ENCODE measurements at regions of chr17 and their contacts with region 1.

Region 1: DNA sequence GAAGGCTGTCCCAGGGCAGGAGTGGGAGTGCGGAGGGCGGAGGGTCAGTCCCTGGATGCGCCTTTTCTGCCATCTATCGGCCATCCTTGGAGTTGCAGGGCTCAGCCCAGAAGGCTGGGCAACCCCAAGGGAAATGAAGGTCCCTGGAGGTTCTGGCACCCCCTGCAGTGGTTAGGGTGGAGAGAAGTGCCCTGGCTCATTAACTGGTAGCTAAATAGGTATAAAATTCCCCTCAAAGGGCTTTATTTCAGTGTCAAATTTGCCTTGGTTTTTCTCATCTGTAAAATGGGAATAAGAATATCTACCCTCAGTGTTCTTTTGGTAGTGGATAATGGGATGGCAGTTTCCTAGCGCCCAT is 22.4 kb downstream of the C17orf75 start:
- DNase-seq: peak; percentile 47 to 98
- H3K4me3 ChIP-seq: no peak overlapping the region
- H3K27ac ChIP-seq: no peak overlapping the region
- H3K4me1 ChIP-seq: peaks cover 0 to 15% (median 10%) of the 10 kb centered on the region in 4 experiments; a peak in 6 of 7 replicates
- H3K27me3 ChIP-seq: no peaks in the 10 kb centered on the region
- CTCF ChIP-seq: peak; percentile 96 to 99 (median 99)
- EP300 ChIP-seq: peak in 1 of 2 experiments; percentile 94; a peak in 1 of 3 replicates
- POLR2A ChIP-seq: no peak
- RAD21 ChIP-seq: peak; percentile 98

Region 2: DNA sequence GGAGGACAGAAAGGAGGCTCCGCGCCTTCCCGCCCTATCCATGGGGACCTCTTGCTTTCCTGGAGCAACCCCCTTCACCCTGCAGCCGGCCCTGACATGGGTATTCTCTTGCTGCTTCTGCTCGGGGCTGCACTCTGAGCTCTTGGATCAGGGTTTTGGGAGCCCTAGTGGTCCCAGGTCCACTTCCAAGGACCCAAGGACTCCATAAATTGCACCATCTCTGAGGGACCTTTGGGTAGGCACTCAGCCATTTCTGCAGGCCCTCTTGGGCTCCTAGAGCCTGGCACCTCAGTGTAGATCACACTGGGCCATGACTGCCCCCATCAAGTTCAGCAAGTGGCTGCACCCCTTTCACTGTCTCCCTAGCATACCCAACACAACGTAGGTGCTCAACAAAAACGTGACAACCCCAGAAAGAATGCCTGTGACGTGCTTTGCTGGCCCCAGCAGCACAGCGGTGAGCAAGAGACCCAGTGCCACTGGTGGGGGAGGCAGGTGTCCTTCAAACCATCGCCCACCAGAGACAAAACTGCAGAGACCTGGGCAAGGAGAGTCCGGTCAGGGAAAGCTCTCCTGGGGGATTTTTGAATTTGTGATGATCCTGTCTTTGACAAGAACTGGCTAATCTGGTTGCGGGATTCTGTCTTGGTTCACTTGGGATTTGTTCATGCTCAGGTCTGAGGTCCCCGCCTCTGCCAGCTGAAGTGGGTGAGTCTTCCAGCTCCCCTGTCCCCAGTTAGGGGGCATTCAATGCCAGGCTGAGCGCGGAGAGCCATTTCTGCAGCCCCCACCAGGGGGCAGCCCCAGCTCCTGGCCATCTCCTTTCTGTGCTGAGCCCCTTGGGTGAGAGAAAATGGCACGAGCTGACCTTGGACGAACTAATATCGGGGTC is 930.5 kb before region 1 on chr17:
- CTCF ChIA-PET with region 1: no interaction called
- POLR2A ChIA-PET with region 1: no interaction called
- DNase-seq: peak in 1 of 2 experiments; percentile 87
- H3K4me3 ChIP-seq: peak overlapping the region in 1 of 4 experiments; percentile 30; a peak in 1 of 8 replicates
- H3K27ac ChIP-seq: no peak overlapping the region
- H3K4me1 ChIP-seq: peaks cover 0 to 14% (median 9%) of the 10 kb centered on the region in 4 experiments; a peak in 6 of 7 replicates
- H3K27me3 ChIP-seq: peaks cover 1 to 29% (median 22%) of the 10 kb centered on the region in 4 experiments
- CTCF ChIP-seq: peak; percentile 78 to 89 (median 85)
- EP300 ChIP-seq: no peak
- POLR2A ChIP-seq: no peak
- RAD21 ChIP-seq: peak; percentile 67 to 79

Region 3: DNA sequence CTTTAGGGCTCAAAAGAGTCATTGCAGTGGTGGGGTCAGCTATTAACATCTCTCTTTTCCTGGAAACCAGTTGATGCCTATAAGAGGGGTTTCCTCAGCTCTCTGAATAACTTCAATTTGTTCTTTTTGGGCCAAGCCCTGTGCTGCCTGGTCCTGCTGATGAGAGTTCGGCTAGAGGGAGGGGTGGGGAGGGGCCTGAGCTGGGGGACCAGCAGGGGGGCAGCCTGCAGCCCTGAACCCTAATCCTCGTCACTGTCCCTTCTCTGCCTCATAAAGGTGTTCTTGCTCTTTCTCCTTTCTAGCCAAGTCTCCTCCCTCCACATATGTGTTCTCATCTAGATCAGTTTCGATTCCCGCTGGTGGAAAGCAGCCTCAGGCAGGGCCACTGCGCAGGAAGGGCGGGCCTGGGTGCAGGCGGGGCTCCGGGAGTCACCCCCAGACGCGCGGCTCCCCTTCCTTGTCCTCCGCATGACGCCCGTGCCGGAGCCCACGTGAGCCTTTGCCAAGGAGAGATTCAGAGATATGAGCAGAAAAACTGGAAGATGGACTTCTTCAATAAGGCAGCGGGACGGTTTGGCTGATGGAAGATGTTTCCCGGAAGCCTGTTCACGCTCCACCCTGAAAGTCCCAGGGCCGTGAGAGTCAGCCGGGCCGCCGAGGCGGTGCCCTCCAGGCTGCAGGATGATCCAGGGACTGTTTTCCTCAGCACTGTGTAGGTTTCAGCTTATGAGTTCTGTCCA is 192.2 kb before region 1 on chr17:
- CTCF ChIA-PET with region 1: no interaction called
- POLR2A ChIA-PET with region 1: no interaction called
- DNase-seq: peak in 1 of 2 experiments; percentile 76
- H3K4me3 ChIP-seq: peak overlapping the region; percentile 61 to 88 (median 74)
- H3K27ac ChIP-seq: peak overlapping the region; percentile 25; the same call in 1 of the 2 replicates
- H3K4me1 ChIP-seq: peaks cover 0 to 5% (median under 1%) of the 10 kb centered on the region in 4 experiments; a peak in 3 of 7 replicates
- H3K27me3 ChIP-seq: no peaks in the 10 kb centered on the region
- CTCF ChIP-seq: no peak
- EP300 ChIP-seq: no peak
- POLR2A ChIP-seq: peak in 1 of 2 experiments; percentile 40; a peak in 1 of 3 replicates
- RAD21 ChIP-seq: no peak

Region 4: DNA sequence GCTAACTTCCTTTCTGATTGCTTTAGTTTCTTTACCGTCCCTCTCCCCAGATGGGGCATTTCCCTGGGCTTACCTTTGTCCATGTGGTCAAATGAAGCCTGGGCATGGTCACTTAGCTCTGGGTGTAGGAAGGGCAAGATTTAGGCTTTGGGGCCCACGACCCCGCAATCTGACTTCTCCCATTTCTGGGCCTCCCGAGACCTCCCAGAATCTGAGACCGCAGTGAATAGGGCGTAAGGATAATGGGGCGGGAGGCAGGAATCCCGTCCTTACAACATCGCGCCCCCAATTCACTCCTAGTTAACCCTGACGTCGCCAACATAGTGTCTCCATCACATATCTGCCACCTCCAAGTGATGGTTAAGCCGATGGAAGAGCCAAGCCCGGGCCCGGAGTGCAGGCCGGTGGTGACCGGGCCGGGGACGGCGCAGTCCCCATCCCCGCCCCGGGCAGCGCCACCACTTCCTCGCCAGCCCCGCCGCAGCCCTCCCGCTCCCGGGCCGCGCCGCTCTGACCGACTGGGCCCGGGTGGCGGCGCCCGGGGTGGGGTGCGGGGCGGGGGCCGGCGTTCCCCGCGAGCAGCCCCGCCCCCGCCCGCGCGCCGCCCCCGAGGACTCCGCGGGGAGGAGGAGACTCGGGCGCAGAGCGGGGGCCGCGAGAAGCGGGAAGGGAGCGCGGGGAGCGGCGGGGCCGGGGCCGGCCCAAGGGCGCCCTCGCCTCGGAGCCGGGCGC is 54.2 kb before region 1 on chr17 and contains the start of gene RHBDL3:
- CTCF ChIA-PET with region 1: interaction called, 61 read pairs
- POLR2A ChIA-PET with region 1: interaction called, 3 read pairs
- DNase-seq: no peak
- H3K4me3 ChIP-seq: peak within 1 kb of the TSS; percentile 42 to 87 (median 67)
- H3K27ac ChIP-seq: no peak within 1 kb of the TSS
- H3K4me1 ChIP-seq: peaks cover 7 to 24% (median 16%) of the 10 kb centered on the region in 4 experiments
- H3K27me3 ChIP-seq: peaks cover 0 to 34% (median 29%) of the 10 kb centered on the region in 4 experiments; a peak in 5 of 7 replicates
- CTCF ChIP-seq: no peak
- EP300 ChIP-seq: no peak
- POLR2A ChIP-seq: no peak
- RAD21 ChIP-seq: no peak
- total RNA-seq, gene RHBDL3: 11.8 and 12.2 TPM in 2 replicates

Region 5: GRCh38 chr17:32281011-32281451 is 38.5 kb before region 1 on chr17:
- CTCF ChIA-PET with region 1: interaction called, 32 read pairs
- POLR2A ChIA-PET with region 1: interaction called, 3 read pairs
- DNase-seq: peak in 1 of 2 experiments; percentile 82
- H3K4me3 ChIP-seq: peak overlapping the region in 2 of 4 experiments; percentile 20 to 22; a peak in 1 of 8 replicates
- H3K27ac ChIP-seq: no peak overlapping the region
- H3K4me1 ChIP-seq: peaks cover 8 to 42% (median 32%) of the 10 kb centered on the region in 4 experiments
- H3K27me3 ChIP-seq: peaks cover 0 to 2% (median 0%) of the 10 kb centered on the region in 4 experiments; a peak in 2 of 7 replicates
- CTCF ChIP-seq: no peak
- EP300 ChIP-seq: no peak
- POLR2A ChIP-seq: no peak; a peak in 1 of 3 replicates
- RAD21 ChIP-seq: no peak

Region 6: GRCh38 chr17:32302860-32303649 is 16.5 kb before region 1 on chr17:
- CTCF ChIA-PET with region 1: interaction called, 27 read pairs
- POLR2A ChIA-PET with region 1: interaction called, 4 read pairs
- DNase-seq: peak in 1 of 2 experiments; percentile 70
- H3K4me3 ChIP-seq: peak overlapping the region in 2 of 4 experiments; percentile 5 to 22; a peak in 3 of 8 replicates
- H3K27ac ChIP-seq: peak overlapping the region; percentile 68; the same call in 1 of the 2 replicates
- H3K4me1 ChIP-seq: peaks cover 17 to 35% (median 21%) of the 10 kb centered on the region in 4 experiments
- H3K27me3 ChIP-seq: no peaks in the 10 kb centered on the region
- CTCF ChIP-seq: no peak
- EP300 ChIP-seq: peak in 1 of 2 experiments; percentile 41; a peak in 1 of 3 replicates
- POLR2A ChIP-seq: 0 out of 3 replicates have a peak, but pooled peaks of 1 of the 2 experiments have one; percentile 12
- RAD21 ChIP-seq: no peak

Region 7: DNA sequence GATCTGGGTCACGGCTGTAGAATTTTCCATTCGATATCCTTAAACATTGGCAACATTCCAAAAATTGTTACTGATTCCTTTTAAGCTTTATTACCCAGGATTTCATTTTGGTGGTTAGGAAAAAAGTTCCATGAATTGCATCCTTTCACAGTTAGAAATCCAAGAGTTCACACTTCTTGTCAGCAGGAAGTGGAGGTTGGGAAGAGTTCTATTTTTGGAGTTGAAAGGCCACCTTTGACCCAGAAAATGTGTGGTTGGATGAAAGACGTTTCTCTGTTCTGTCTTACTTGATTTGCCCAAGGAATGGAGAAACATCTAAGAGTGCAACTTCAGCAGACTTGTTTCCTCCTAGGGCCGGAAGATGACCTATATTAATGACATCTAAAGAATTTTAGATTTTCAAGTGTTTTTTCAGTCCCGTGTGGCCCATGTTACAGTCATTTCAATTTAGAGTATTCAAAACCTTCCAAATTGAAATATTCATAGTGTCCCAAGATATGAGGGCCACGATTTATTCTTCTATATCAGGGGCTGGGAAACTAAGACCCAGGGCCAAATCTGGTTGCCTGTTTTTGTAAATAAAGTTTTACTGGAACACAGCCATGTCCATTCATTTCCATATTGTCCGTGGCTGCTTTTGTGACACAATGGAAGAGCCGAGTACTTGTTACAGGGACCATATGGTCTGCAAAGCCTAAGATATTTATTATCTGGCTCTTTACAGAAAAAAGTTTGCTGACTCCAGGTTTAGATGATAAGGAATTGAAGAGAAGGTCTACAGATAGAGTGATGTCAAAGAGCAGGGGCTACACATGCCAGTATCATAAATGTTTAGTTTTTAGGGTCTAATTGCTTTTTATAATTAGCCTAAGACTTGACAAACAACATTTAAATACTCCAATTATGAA is 217.5 kb after region 1 on chr17:
- CTCF ChIA-PET with region 1: no interaction called
- POLR2A ChIA-PET with region 1: no interaction called
- DNase-seq: no peak
- H3K4me3 ChIP-seq: no peak overlapping the region
- H3K27ac ChIP-seq: no peak overlapping the region
- H3K4me1 ChIP-seq: peaks cover 0 to 5% (median 3%) of the 10 kb centered on the region in 4 experiments; a peak in 4 of 7 replicates
- H3K27me3 ChIP-seq: no peaks in the 10 kb centered on the region
- CTCF ChIP-seq: no peak
- EP300 ChIP-seq: no peak
- POLR2A ChIP-seq: no peak
- RAD21 ChIP-seq: no peak